Breast epithelium (tissue), 4 donors: ENCODE measurements at regions of chr1 and their contacts with region 1.

Region 1: DNA sequence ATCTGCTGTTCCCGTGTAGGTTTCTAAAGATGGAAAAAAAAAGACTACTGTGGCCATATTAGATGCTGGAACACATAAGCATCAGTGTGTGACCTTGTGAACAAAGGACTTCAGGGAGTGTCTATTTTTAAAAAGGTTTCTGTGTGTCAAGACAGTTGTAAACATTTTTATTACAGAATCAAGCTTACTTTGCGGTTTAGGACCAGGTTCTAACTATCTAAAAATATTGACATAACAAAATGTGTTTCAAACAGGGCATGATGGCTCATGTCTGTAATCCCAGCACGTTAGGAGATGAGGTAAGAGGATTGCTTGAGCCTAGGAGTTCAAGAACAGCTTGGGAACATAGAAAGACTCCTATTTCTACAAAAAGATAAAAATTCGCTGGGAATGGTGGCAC is 7.1 kb upstream of the DDI2 start:
- DNase-seq: no peak
- H3K4me3 ChIP-seq: no peak overlapping the region
- H3K27ac ChIP-seq: no peak overlapping the region
- H3K4me1 ChIP-seq: no peaks in the 10 kb centered on the region
- H3K27me3 ChIP-seq: no peaks in the 10 kb centered on the region
- CTCF ChIP-seq: no peak
- POLR2A ChIP-seq: no peak

Region 2: GRCh38 chr1:15246960-15247614 is 363.1 kb before region 1 on chr1 and contains the start of gene FHAD1:
- intact Hi-C with region 1: loop called (anchors 5 kb)
- DNase-seq: peak; percentile 44 to 66
- H3K4me3 ChIP-seq: peak within 1 kb of the TSS; percentile 24 to 67 (median 60)
- H3K27ac ChIP-seq: peak within 1 kb of the TSS; percentile 38 to 76
- H3K4me1 ChIP-seq: no peaks in the 10 kb centered on the region
- H3K27me3 ChIP-seq: no peaks in the 10 kb centered on the region
- CTCF ChIP-seq: no peak
- POLR2A ChIP-seq: no peak
- total RNA-seq, gene FHAD1: 1.0 to 2.3 TPM in 2 of 3 donors, not detected in the other

Region 3: DNA sequence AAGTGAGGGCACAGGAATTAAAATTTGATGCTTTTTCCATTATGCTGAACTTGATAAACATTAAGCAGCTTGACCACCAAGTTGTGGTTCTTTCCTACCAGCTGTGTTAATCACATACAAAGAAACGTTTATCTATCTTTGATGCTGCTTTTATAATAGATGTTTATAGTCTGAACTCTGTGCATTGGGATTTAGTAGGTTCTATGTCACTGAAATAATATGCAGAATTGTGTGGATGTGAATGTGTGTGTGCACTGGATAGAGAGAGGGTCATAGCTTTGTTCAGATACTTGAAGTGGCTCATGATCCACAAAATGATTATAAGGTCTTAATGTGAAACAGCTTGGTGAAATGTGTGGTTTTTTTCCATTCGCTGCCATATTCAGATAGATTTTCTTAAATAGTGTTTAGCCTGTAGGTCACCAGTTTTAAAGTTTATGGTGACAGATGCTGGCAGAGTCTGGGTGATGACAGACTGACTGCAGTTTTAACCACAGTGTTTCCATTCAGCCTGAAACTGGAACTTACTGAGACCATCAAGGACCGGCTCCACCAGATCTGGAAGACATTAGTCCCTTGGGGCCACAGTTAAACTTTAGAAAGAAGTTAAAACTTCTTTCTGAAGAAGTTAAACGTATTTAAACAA is 17.3 kb after region 1 on chr1:
- intact Hi-C with region 1: loop called (anchors 2 kb)
- DNase-seq: no peak
- H3K4me3 ChIP-seq: no peak overlapping the region
- H3K27ac ChIP-seq: peak overlapping the region in 1 of 2 donors; percentile 3
- H3K4me1 ChIP-seq: peaks cover 0 to 8% of the 10 kb centered on the region in 2 donors
- H3K27me3 ChIP-seq: no peaks in the 10 kb centered on the region
- CTCF ChIP-seq: no peak
- POLR2A ChIP-seq: no peak